ENCODE measurements at regions of chr5 and their contacts with region 1.

Region 1: GRCh38 chr5:133316427-133316826 is 264.6 kb downstream of the HSPA4 start:
- DNase-seq: no peak
- H3K4me3 ChIP-seq: no peak overlapping the region
- H3K27ac ChIP-seq: no peak overlapping the region
- H3K4me1 ChIP-seq: peaks cover 6% of the 10 kb centered on the region
- H3K27me3 ChIP-seq: no peaks in the 10 kb centered on the region
- CTCF ChIP-seq: peak in 1 of 2 donors; percentile 2

Region 2: GRCh38 chr5:132629230-132629944 is 687.0 kb before region 1 on chr5:
- CTCF ChIA-PET with region 1: no interaction called
- dilution Hi-C with region 1: no loop called
- in situ Hi-C with region 1: no loop called
- intact Hi-C with region 1: no loop called
- DNase-seq: no peak
- H3K4me3 ChIP-seq: no peak overlapping the region
- H3K27ac ChIP-seq: no peak overlapping the region
- H3K4me1 ChIP-seq: no peaks in the 10 kb centered on the region
- H3K27me3 ChIP-seq: no peaks in the 10 kb centered on the region
- CTCF ChIP-seq: no peak

Region 3: DNA sequence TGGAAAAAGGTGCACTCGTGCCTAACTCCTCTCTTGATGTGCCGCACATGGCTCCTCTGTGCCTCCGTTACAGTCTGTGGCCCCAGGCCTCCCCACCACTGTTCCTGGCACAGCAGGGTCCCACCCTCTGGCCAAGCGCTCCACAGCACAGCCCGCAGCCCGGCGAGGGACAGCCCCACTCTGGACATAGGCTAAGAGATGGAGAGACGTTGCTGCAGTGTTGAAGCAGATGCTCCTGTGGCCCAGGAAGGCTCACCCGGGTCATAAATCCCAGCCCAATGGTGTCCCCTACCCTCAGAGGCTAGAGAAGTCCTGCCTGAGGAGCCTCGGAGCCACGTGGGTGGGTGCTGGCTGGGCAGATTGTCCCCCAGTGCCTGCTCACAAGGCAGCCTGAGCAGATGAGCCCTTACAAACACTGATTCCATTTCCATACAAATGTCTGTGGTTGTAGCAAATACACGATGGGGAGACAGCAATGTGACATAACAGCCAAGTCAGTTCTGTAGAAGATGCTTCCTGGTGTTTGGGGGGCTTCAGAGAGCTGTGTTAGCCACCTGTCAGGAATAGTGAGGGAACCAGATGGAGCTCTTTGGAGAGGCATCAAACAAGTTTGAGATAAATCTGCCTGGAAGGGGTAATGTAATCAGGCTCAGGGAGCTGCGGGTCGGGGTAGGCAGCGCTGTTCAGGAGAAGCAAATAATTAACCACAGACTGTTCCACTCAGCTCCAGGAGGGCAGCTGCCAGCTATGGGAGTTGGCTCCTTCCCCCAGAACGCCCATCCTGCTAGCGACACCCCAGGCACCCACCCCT is 610.3 kb after region 1 on chr5:
- CTCF ChIA-PET with region 1: no interaction called
- dilution Hi-C with region 1: loop called (anchors 10 kb)
- in situ Hi-C with region 1: no loop called
- intact Hi-C with region 1: no loop called
- DNase-seq: no peak
- H3K4me3 ChIP-seq: no peak overlapping the region
- H3K27ac ChIP-seq: no peak overlapping the region
- H3K4me1 ChIP-seq: no peaks in the 10 kb centered on the region
- H3K27me3 ChIP-seq: no peaks in the 10 kb centered on the region
- CTCF ChIP-seq: no peak